ENCODE measurements at regions of chr7 and their contacts with region 1.

Region 1: GRCh38 chr7:142811154-142811737 is 40.5 kb downstream of the PRSS2 start:
- DNase-seq: peak; percentile 61
- H3K4me3 Mint-ChIP-seq: peak overlapping the region; percentile 42
- H3K27ac Mint-ChIP-seq: peak overlapping the region; percentile 99
- H3K4me1 Mint-ChIP-seq: peaks cover 83% of the 10 kb centered on the region
- H3K27me3 Mint-ChIP-seq: no peaks in the 10 kb centered on the region

Region 2: GRCh38 chr7:141975806-141976523 is 835.3 kb before region 1 on chr7:
- CTCF ChIA-PET with region 1: no interaction called
- intact Hi-C with region 1: loop called (anchors 5 kb)
- DNase-seq: peak; percentile 88
- H3K4me3 Mint-ChIP-seq: peak overlapping the region; percentile 76
- H3K27ac Mint-ChIP-seq: peak overlapping the region; percentile 28
- H3K4me1 Mint-ChIP-seq: peaks cover 18% of the 10 kb centered on the region
- H3K27me3 Mint-ChIP-seq: no peaks in the 10 kb centered on the region

Region 3: GRCh38 chr7:142352543-142352942 is 458.7 kb before region 1 on chr7:
- CTCF ChIA-PET with region 1: interaction called, 3 read pairs
- intact Hi-C with region 1: loop called (anchors 1 kb)
- DNase-seq: peak; percentile 52
- H3K4me3 Mint-ChIP-seq: peak overlapping the region; percentile 74
- H3K27ac Mint-ChIP-seq: peak overlapping the region; percentile 73
- H3K4me1 Mint-ChIP-seq: peaks cover 30% of the 10 kb centered on the region
- H3K27me3 Mint-ChIP-seq: no peaks in the 10 kb centered on the region

Region 4: DNA sequence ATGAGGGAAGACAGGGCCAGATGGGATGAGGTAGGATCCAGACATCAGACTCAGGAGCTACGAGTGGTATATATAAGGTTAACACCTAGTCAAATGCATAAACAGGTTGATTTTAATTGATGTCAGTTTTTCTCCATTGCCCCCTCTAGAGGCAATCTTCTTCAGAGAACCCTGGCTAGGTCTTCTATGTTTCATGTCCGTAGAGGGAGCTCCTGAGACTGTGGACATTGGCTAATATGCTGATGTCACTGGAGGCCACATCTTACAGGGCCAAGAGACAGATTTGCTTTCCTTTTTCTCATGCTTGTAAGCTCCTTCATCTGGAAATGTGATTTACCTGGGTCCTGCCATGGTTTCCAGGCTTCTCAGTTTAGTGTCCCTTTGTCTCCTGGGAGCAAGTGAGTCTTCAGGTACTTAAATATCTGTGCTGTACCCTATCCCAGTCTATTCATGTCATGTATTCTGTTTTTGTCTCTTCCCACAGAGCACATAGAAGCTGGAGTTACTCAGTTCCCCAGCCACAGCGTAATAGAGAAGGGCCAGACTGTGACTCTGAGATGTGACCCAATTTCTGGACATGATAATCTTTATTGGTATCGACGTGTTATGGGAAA is 223.6 kb before region 1 on chr7:
- CTCF ChIA-PET with region 1: interaction called, 4 read pairs
- intact Hi-C with region 1: loop called (anchors 1 kb)
- DNase-seq: no peak
- H3K4me3 Mint-ChIP-seq: peak overlapping the region; percentile 44
- H3K27ac Mint-ChIP-seq: peak overlapping the region; percentile 70
- H3K4me1 Mint-ChIP-seq: peaks cover 12% of the 10 kb centered on the region
- H3K27me3 Mint-ChIP-seq: no peaks in the 10 kb centered on the region

Region 5: GRCh38 chr7:142782922-142783900 is 28.0 kb before region 1 on chr7:
- CTCF ChIA-PET with region 1: interaction called, 382 read pairs
- intact Hi-C with region 1: loop called (anchors 1 kb)
- DNase-seq: peak; percentile 86
- H3K4me3 Mint-ChIP-seq: peak overlapping the region; percentile 72
- H3K27ac Mint-ChIP-seq: peak overlapping the region; percentile 99
- H3K4me1 Mint-ChIP-seq: peaks cover 8% of the 10 kb centered on the region
- H3K27me3 Mint-ChIP-seq: no peaks in the 10 kb centered on the region

Region 6: DNA sequence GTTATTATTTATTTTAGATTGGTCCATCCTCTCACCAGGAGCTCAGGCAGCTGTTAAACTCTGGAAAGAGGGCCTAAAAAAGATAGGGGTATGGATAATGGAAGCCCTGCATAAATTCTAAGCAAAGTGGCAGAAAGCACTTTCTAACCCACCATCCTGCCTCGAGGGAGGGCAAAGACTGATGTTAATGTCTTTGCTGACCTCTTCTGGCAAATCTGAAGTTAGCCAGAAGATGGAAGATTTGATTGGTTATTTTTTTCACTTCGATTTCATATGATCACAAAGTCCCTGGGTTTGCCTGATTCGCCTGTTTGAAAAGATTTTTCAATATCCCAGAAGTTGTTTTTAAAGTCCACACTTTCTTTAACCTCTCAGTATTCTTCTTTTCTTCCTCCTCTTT is 190.9 kb after region 1 on chr7:
- CTCF ChIA-PET with region 1: interaction called, 13 read pairs
- intact Hi-C with region 1: loop called (anchors 1 kb)
- DNase-seq: no peak
- H3K4me3 Mint-ChIP-seq: no peak overlapping the region
- H3K27ac Mint-ChIP-seq: no peak overlapping the region
- H3K4me1 Mint-ChIP-seq: peaks cover 5% of the 10 kb centered on the region
- H3K27me3 Mint-ChIP-seq: no peaks in the 10 kb centered on the region

Region 7: DNA sequence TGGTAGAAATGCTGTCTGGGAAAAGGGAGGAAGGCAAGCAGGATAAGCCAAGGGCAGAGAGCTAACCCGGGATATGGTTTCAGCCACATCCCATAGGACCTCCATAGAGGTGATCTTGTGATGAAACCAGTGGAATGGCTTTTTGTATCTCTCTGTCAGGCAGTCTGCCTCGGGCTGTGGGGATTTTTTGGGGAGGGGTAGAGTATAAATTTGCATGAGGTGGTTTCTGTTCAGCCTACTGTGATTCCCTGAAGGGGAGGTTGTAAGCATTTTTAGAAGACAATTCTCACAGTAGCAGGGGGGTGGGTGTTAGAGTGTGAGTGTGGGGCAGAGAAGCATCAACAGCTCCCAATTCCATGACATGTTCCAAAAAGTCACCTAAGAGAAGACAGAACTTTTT is 203.8 kb after region 1 on chr7:
- CTCF ChIA-PET with region 1: no interaction called
- intact Hi-C with region 1: no loop called
- DNase-seq: no peak
- H3K4me3 Mint-ChIP-seq: no peak overlapping the region
- H3K27ac Mint-ChIP-seq: no peak overlapping the region
- H3K4me1 Mint-ChIP-seq: no peaks in the 10 kb centered on the region
- H3K27me3 Mint-ChIP-seq: no peaks in the 10 kb centered on the region

Measured in activated naive CD4-positive, alpha-beta T cell treated with anti-CD3 and anti-CD28 coated beads for 36 hours (primary cell).